Prostate gland (tissue), 2 donors: ENCODE measurements at regions of chr2 and their contacts with region 1.

Region 1: GRCh38 chr2:48471048-48471474 is 58.9 kb upstream of the STON1 start:
- DNase-seq: peak; percentile 68
- H3K4me3 ChIP-seq: no peak overlapping the region
- H3K27ac ChIP-seq: peak overlapping the region; percentile 29 to 64
- H3K4me1 ChIP-seq: no peaks in the 10 kb centered on the region
- H3K27me3 ChIP-seq: no peaks in the 10 kb centered on the region
- CTCF ChIP-seq: peak; percentile 43 to 88 (median 75)
- POLR2A ChIP-seq: no peak

Region 2: GRCh38 chr2:48589170-48589767 is 118.2 kb after region 1 on chr2:
- intact Hi-C with region 1: loop called (anchors 10 kb)
- DNase-seq: no peak
- H3K4me3 ChIP-seq: no peak overlapping the region
- H3K27ac ChIP-seq: no peak overlapping the region
- H3K4me1 ChIP-seq: no peaks in the 10 kb centered on the region
- H3K27me3 ChIP-seq: no peaks in the 10 kb centered on the region
- CTCF ChIP-seq: peak; percentile 59 to 77 (median 68)
- POLR2A ChIP-seq: no peak